T-cell (primary cell): ENCODE measurements at regions of chr7 and their contacts with region 1.

Region 1: GRCh38 chr7:102272075-102272917 is 14.4 kb upstream of the SH2B2 start:
- DNase-seq: peak in 34 of 35 experiments; percentile 15 to 82 (median 66)
- ATAC-seq: peak; percentile 71 to 82 (median 78)
- H3K4me3 ChIP-seq: no peak overlapping the region
- H3K4me3 Mint-ChIP-seq: no peak overlapping the region
- H3K27ac ChIP-seq: no peak overlapping the region
- H3K27ac Mint-ChIP-seq: no peak overlapping the region
- H3K4me1 ChIP-seq: peaks cover 0 to 5% of the 10 kb centered on the region in 2 experiments
- H3K4me1 Mint-ChIP-seq: peaks cover 0 to 3% (median 0%) of the 10 kb centered on the region in 3 donors
- H3K27me3 ChIP-seq: peaks cover 0 to 3% of the 10 kb centered on the region in 2 experiments
- H3K27me3 Mint-ChIP-seq: no peaks in the 10 kb centered on the region

Region 2: DNA sequence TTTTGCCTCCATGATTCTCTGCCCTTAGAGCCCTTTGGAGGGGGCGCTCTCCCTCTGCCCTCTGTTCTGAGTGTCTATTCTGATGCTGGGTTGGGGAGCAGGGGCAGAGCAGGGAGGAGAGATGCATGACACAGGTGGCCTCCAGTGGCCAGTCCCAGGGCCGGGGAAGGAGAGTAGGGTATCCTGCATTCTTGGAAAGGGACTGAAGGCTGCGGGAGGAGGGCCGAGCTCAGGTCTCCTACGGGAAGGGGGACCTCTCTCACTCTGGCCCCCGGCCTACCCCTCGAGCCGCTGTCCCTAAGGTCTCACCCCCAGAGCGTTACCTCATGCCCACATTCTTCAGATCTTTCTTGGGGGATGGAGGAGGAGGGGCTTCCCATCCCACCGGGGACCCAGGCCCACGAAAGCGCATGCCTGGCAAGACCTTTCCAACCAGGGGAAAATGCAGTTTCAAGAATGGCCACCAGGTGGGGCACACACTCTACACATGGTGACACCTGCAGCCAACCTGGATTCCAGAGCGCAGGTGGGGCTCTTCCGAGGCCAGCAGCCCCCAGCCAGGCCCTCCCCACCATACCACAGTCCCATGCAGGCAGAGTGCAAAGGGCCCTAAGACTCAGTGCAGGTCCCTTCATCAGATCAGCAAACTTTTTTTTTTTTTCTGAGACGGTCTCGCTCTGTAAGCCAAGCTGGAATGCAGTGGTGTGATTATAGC is 729.6 kb before region 1 on chr7:
- CTCF ChIA-PET with region 1: interaction called in 1 of 2 experiments, 13 read pairs
- POLR2A ChIA-PET with region 1: no interaction called
- DNase-seq: peak; percentile 30 to 79 (median 65)
- ATAC-seq: peak; percentile 57 to 68 (median 60)
- H3K4me3 ChIP-seq: no peak overlapping the region
- H3K4me3 Mint-ChIP-seq: no peak overlapping the region
- H3K27ac ChIP-seq: no peak overlapping the region
- H3K27ac Mint-ChIP-seq: no peak overlapping the region
- H3K4me1 ChIP-seq: peaks cover 0 to 4% of the 10 kb centered on the region in 2 experiments
- H3K4me1 Mint-ChIP-seq: peaks cover 3 to 16% (median 3%) of the 10 kb centered on the region in 3 donors
- H3K27me3 ChIP-seq: peaks cover 0 to 29% of the 10 kb centered on the region in 2 experiments
- H3K27me3 Mint-ChIP-seq: peaks cover 2 to 4% of the 10 kb centered on the region in 2 donors

Region 3: GRCh38 chr7:102376964-102377466 is 104.7 kb after region 1 on chr7:
- CTCF ChIA-PET with region 1: no interaction called
- POLR2A ChIA-PET with region 1: no interaction called
- DNase-seq: no peak
- ATAC-seq: no peak
- H3K4me3 ChIP-seq: no peak overlapping the region
- H3K4me3 Mint-ChIP-seq: no peak overlapping the region
- H3K27ac ChIP-seq: no peak overlapping the region
- H3K27ac Mint-ChIP-seq: peak overlapping the region in 1 of 2 donors; percentile 28
- H3K4me1 ChIP-seq: no peaks in the 10 kb centered on the region
- H3K4me1 Mint-ChIP-seq: peaks cover 7 to 14% (median 10%) of the 10 kb centered on the region in 3 donors
- H3K27me3 ChIP-seq: no peaks in the 10 kb centered on the region
- H3K27me3 Mint-ChIP-seq: no peaks in the 10 kb centered on the region